Heart right ventricle (tissue), 16 donors: ENCODE measurements at regions of chr17 and their contacts with region 1.

Region 1: GRCh38 chr17:58060596-58061191 is 22.5 kb upstream of the DYNLL2 start:
- DNase-seq: peak; percentile 62 to 68
- ATAC-seq: peak; percentile 78 to 96 (median 94)
- H3K4me3 ChIP-seq: no peak overlapping the region
- H3K27ac ChIP-seq: peak overlapping the region in 1 of 10 donors; percentile 22
- H3K4me1 ChIP-seq: peaks cover 0 to 19% (median 12%) of the 10 kb centered on the region in 9 donors
- H3K27me3 ChIP-seq: peaks cover 0 to 3% (median 0%) of the 10 kb centered on the region in 7 donors
- CTCF ChIP-seq: no peak

Region 2: DNA sequence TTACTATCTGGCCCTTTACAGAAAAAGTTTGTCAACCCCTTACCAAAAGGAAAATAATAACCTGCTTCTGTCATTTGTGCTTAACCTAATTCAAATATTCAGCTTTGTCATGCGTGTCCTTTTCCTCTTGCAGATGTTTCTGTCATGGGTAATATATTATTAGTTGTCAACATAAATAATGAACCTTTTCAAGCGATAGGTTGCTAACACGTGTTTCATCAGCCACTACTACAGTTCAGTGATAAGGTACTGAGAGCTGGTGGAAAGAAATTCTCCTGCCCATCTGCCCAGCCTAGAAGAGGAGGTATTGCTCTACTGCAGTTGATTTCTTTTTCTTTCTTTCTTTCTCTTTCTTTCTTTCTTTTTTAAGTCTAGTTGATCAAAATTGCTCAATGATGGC is 41.7 kb before region 1 on chr17:
- intact Hi-C with region 1: loop called in 1 of 10 experiments (anchors 10 kb)
- DNase-seq: no peak
- ATAC-seq: no peak
- H3K4me3 ChIP-seq: no peak overlapping the region
- H3K27ac ChIP-seq: no peak overlapping the region
- H3K4me1 ChIP-seq: no peaks in the 10 kb centered on the region
- H3K27me3 ChIP-seq: peaks cover 0 to 21% (median 4%) of the 10 kb centered on the region in 7 donors
- CTCF ChIP-seq: no peak

Region 3: DNA sequence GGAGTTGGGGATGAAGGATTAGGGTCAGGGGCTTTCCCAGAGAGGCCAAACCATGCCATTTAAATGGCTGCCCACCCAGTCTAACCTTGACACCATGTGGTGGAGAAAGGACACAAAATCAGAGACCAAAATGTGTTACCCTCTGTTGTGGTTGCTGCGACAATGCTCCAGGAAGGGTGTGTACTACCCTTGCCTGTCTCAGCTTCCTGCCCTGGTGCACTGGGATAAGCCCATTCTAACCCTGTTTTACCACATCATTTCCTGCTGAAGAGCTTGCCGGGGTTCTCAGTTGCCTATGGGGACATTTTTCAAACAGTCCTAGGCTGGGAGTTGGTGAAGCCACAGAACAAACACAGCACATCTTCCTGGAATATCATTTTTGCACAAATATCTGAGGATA is 92.4 kb after region 1 on chr17:
- intact Hi-C with region 1: no loop called
- DNase-seq: no peak
- ATAC-seq: peak in 6 of 8 donors; percentile 41 to 83 (median 62)
- H3K4me3 ChIP-seq: no peak overlapping the region
- H3K27ac ChIP-seq: peak overlapping the region in 4 of 10 donors; percentile 11 to 46 (median 33)
- H3K4me1 ChIP-seq: peaks cover 0 to 27% (median 12%) of the 10 kb centered on the region in 9 donors
- H3K27me3 ChIP-seq: peaks cover 0 to 74% (median 39%) of the 10 kb centered on the region in 7 donors
- CTCF ChIP-seq: no peak